ENCODE measurements at regions of chr9 and their contacts with region 1.

Region 1: GRCh38 chr9:109119439-109120203 is at the start of gene TMEM245:
- DNase-seq: peak; percentile 92 to 99 (median 98)

Region 2: DNA sequence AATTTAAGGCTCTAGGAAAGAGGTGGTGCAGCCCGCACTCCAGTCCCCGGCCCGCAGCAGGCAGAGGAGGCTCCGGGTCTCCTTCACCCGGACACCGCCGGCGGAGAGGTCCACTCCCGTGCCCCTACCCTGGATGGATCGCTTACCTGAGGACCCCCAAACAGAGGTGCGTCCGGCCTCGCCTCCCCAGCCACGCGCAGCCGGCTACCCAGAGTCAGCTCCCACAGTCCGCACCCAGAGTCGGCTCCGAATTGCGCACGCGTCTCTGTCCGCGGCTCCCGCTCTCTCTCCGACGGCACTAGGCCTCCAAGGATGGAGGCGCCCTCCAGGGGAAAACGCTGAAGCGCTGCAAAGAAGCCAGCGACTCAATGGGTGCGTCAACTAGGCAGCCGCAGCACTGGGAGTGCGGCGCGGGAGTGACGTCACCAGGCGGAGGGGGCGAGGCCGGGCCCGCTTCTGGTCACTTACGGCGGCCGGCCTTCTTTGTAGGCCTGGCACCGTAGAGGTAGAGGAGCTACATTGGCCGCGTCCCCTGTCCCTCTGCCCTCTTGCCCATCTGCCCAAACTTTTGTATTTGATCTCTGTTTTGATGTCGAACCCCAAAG is 185.8 kb before region 1 on chr9 and contains the start of gene ELP1:
- intact Hi-C with region 1: loop called (anchors 10 kb)
- DNase-seq: peak; percentile 82 to 98 (median 95)

Region 3: GRCh38 chr9:109012876-109013678 is 106.5 kb before region 1 on chr9 and contains the start of gene CTNNAL1:
- intact Hi-C with region 1: loop called (anchors 5 kb)
- DNase-seq: peak; percentile 75 to 95 (median 90)

Measured in head of caudate nucleus (tissue), 42 donors.